Caco-2 (cell line): ENCODE measurements at regions of chr11 and their contacts with region 1.

Region 1: DNA sequence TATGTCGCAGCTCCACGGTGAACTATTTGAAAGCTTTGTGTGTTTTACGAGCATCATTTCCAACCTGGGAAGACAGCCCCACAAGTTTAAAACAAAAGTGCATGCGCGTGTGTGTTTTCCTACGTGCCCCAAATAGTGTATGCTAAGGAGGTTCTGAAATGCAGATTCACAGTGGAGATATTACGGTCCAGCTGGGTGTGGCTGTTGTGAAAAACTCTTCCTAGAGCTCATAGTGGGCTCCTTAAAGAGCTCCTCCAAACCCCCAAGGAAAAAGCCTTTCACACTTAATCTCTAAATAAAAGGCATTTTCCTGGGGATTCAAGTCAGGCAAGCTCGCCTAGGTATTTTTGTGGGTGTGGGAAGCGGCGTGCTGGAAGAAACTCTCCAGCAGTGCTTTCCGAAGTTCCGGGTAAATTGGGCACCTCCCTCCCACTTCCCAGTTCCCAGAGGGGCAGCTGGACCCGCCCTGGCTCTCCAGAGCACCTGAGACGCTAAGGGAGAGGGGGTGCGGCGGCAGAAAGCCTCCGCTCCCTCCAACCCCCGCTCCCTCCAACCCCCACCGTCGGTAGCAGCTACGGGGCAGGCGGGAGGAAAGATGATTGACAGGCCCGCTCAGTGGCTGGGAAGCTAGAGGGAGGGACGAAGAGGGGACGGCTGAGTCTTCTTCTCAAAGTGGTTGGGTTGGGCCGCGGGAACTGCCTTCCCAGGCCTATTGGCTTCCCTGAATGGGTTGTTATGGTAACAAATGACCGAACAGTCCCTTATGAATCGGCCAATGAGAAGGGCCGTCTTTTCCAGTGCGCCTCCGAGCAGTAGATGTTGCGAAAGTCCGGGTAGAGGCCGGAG is 558 bp upstream of the PCF11 start:
- DNase-seq: peak; percentile 100
- H3K4me3 ChIP-seq: peak overlapping the region; percentile 49
- H3K4me3 Mint-ChIP-seq: peak overlapping the region; percentile 95
- H3K27ac Mint-ChIP-seq: peak overlapping the region; percentile 99
- H3K4me1 ChIP-seq: peaks cover 21% of the 10 kb centered on the region
- H3K4me1 Mint-ChIP-seq: peaks cover 28% of the 10 kb centered on the region
- H3K27me3 ChIP-seq: no peaks in the 10 kb centered on the region
- H3K27me3 Mint-ChIP-seq: no peaks in the 10 kb centered on the region
- CTCF ChIP-seq: no peak

Region 2: GRCh38 chr11:82900277-82901164 is 255.9 kb before region 1 on chr11 and contains the start of gene PRCP:
- CTCF ChIA-PET with region 1: interaction called, 9 read pairs
- POLR2A ChIA-PET with region 1: interaction called, 34 read pairs
- intact Hi-C with region 1: loop called (anchors 1 kb)
- DNase-seq: peak; percentile 99
- H3K4me3 ChIP-seq: peak within 1 kb of the TSS; percentile 63
- H3K4me3 Mint-ChIP-seq: peak within 1 kb of the TSS; percentile 93
- H3K27ac Mint-ChIP-seq: peak within 1 kb of the TSS; percentile 95
- H3K4me1 ChIP-seq: peaks cover 4% of the 10 kb centered on the region; the same call in 1 of the 2 replicates
- H3K4me1 Mint-ChIP-seq: peaks cover 40% of the 10 kb centered on the region
- H3K27me3 ChIP-seq: no peaks in the 10 kb centered on the region
- H3K27me3 Mint-ChIP-seq: no peaks in the 10 kb centered on the region
- CTCF ChIP-seq: no peak
- total RNA-seq, gene PRCP: 107 TPM in 2 replicates

Region 3: DNA sequence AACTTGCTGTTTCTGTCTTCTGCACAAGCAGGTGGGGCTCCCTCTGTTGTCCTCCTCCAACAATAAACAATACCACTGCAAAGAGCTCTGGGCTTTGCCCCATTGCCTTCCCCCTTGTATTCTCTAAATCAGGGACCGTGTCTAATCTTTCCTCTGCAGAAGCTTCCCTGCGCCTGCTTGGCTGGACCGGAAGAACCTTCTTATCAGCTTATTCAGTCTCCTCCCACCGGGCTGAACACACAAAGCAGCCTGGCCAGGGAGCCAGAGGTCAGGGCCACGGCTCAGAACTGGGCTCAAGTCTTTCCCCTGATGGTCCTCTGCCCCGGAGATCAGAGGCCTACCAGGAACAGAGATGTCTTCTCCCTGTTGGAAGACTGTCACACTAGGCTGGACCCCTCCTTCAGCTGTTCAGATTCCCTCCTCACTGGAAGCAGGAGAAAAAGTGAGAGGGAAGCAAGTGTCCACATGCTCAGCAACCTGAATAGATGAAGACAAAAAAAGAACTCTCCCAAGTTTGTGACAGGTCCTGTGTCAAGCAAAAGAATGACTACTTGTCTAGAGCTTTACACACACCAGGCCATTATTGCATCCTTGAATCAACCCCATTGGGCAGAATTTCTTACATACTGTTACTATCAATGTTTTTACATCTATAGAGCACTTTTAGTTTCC is 148.3 kb before region 1 on chr11:
- CTCF ChIA-PET with region 1: no interaction called
- POLR2A ChIA-PET with region 1: no interaction called
- intact Hi-C with region 1: loop called (anchors 2 kb)
- DNase-seq: peak; percentile 79 to 84
- H3K4me3 ChIP-seq: no peak overlapping the region
- H3K4me3 Mint-ChIP-seq: peak overlapping the region; percentile 54
- H3K27ac Mint-ChIP-seq: peak overlapping the region; percentile 76
- H3K4me1 ChIP-seq: peaks cover 25% of the 10 kb centered on the region
- H3K4me1 Mint-ChIP-seq: peaks cover 30% of the 10 kb centered on the region
- H3K27me3 ChIP-seq: no peaks in the 10 kb centered on the region
- H3K27me3 Mint-ChIP-seq: no peaks in the 10 kb centered on the region
- CTCF ChIP-seq: no peak

Region 4: GRCh38 chr11:83087035-83087434 is 69.3 kb before region 1 on chr11:
- CTCF ChIA-PET with region 1: interaction called, 29 read pairs
- POLR2A ChIA-PET with region 1: interaction called, 57 read pairs
- intact Hi-C with region 1: loop called (anchors 1 kb)
- DNase-seq: peak in 1 of 2 experiments; percentile 28
- H3K4me3 ChIP-seq: no peak overlapping the region
- H3K4me3 Mint-ChIP-seq: no peak overlapping the region
- H3K27ac Mint-ChIP-seq: no peak overlapping the region
- H3K4me1 ChIP-seq: peaks cover 13% of the 10 kb centered on the region
- H3K4me1 Mint-ChIP-seq: peaks cover 48% of the 10 kb centered on the region
- H3K27me3 ChIP-seq: no peaks in the 10 kb centered on the region
- H3K27me3 Mint-ChIP-seq: no peaks in the 10 kb centered on the region
- CTCF ChIP-seq: peak; percentile 51 to 61

Region 5: DNA sequence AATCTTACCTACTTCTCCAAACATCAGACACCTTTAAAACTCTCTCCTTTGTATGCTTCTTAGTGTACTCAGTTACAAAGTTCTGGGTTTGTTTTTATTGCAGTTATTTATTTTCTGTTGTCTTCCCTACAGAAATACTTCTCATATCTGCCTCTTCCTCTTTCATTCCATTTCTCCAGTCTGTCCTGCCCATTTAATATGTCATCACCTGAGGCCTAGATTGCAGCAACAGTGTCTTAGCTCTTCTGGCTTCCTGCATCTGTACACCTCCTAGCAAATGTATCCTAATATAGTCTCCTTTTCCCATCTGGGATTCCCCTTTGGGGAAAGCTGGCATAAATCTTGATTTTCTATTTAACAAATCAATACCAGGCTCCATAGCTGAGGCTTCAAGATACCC is 34.3 kb before region 1 on chr11:
- CTCF ChIA-PET with region 1: no interaction called
- POLR2A ChIA-PET with region 1: no interaction called
- intact Hi-C with region 1: no loop called
- DNase-seq: no peak
- H3K4me3 ChIP-seq: no peak overlapping the region
- H3K4me3 Mint-ChIP-seq: no peak overlapping the region
- H3K27ac Mint-ChIP-seq: no peak overlapping the region
- H3K4me1 ChIP-seq: no peaks in the 10 kb centered on the region
- H3K4me1 Mint-ChIP-seq: no peaks in the 10 kb centered on the region
- H3K27me3 ChIP-seq: no peaks in the 10 kb centered on the region
- H3K27me3 Mint-ChIP-seq: no peaks in the 10 kb centered on the region
- CTCF ChIP-seq: no peak

Region 6: DNA sequence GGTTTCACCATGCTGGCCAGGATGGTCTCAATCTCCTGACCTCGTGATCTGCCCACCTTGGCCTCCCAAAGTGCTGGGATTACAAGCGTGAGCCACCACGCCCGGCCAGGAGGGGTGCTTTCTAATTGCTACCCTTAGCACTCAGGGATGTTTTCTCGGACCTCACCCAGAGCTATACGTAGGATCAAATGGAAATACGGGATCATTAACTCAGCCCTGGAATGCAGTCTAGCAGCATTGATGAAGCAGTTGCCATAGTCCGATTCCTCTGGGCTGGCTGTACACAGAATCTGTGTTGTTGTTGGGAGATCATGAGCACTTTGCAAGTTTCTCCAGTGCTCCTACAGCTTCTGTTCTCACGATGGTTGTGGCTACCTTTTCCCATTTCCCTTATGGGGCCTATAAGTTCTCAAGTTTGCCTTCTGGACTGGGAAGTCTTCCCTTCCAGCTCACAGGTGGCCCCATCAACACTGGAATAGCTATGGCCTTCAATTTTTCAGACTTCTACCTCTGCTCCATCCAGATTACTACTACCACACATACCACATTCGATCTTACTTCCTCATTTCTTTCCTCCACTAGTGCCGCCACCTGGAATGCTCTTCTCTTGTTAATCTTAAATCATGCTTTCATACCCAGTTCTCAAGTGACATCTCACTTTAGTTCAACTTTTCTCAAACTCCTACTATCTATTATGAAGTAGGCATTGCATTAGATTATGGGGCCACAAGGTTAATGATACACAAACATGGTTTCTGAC is 15.5 kb before region 1 on chr11:
- CTCF ChIA-PET with region 1: interaction called, 5 read pairs
- POLR2A ChIA-PET with region 1: interaction called, 32 read pairs
- intact Hi-C with region 1: loop called (anchors 1 kb)
- DNase-seq: peak; percentile 75 to 79
- H3K4me3 ChIP-seq: no peak overlapping the region
- H3K4me3 Mint-ChIP-seq: peak overlapping the region; percentile 4
- H3K27ac Mint-ChIP-seq: peak overlapping the region; percentile 57
- H3K4me1 ChIP-seq: peaks cover 18% of the 10 kb centered on the region
- H3K4me1 Mint-ChIP-seq: peaks cover 13% of the 10 kb centered on the region
- H3K27me3 ChIP-seq: no peaks in the 10 kb centered on the region
- H3K27me3 Mint-ChIP-seq: no peaks in the 10 kb centered on the region
- CTCF ChIP-seq: no peak

Region 7: GRCh38 chr11:83193315-83194280 is 37.2 kb after region 1 on chr11 and contains the start of gene ANKRD42:
- CTCF ChIA-PET with region 1: no interaction called
- POLR2A ChIA-PET with region 1: interaction called, 19 read pairs
- intact Hi-C with region 1: loop called (anchors 1 kb)
- DNase-seq: peak; percentile 96 to 97
- H3K4me3 ChIP-seq: peak within 1 kb of the TSS; percentile 77
- H3K4me3 Mint-ChIP-seq: peak within 1 kb of the TSS; percentile 80
- H3K27ac Mint-ChIP-seq: peak within 1 kb of the TSS; percentile 89
- H3K4me1 ChIP-seq: peaks cover 7% of the 10 kb centered on the region; the same call in 1 of the 2 replicates
- H3K4me1 Mint-ChIP-seq: peaks cover 30% of the 10 kb centered on the region
- H3K27me3 ChIP-seq: no peaks in the 10 kb centered on the region
- H3K27me3 Mint-ChIP-seq: no peaks in the 10 kb centered on the region
- CTCF ChIP-seq: peak in 1 of 2 experiments; percentile 4
- total RNA-seq, gene ANKRD42: 8.3 and 9.0 TPM in 2 replicates

Region 8: DNA sequence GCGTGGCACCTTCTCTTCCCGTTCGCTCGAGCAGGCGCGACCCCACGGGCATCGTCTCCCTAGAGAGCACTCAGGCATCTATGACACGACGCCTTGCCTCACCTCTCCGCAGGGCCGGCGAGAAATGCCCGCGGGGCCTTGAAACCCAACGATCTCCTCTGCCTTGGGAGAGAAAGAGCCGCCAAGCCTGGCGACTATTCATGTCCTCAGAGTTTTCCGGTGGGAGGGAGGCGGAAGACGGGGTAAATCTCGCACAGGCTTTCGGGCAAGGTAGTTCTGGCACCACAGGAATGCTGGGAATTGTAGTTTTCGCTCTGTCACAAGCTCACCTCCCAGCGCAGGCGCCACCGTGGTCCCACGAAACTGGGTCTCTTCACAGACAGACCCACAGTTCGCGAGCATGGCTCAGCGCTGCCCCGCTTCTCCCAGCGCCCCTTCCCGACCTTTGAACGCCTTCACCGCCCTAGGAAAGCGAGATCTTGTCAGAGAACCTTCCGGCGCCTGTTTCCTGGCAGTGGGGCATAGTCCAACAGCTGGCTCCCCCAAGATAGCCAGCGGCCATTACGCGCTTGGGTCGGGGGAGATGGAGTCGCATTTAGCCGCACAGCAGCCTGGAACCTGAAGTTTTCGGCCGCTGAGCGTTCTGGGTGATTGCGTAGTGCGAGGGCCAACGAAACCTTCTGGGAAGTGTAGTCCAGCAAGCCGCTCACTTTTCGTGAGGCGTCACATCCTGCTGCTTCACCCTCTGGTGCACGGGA is 129.6 kb after region 1 on chr11 and contains the start of gene CCDC90B:
- CTCF ChIA-PET with region 1: no interaction called
- POLR2A ChIA-PET with region 1: interaction called, 7 read pairs
- intact Hi-C with region 1: loop called (anchors 1 kb)
- DNase-seq: peak; percentile 98 to 99
- H3K4me3 ChIP-seq: peak within 1 kb of the TSS; percentile 93
- H3K4me3 Mint-ChIP-seq: peak within 1 kb of the TSS; percentile 73
- H3K27ac Mint-ChIP-seq: peak within 1 kb of the TSS; percentile 97
- H3K4me1 ChIP-seq: peaks cover 14% of the 10 kb centered on the region
- H3K4me1 Mint-ChIP-seq: peaks cover 7% of the 10 kb centered on the region
- H3K27me3 ChIP-seq: no peaks in the 10 kb centered on the region
- H3K27me3 Mint-ChIP-seq: no peaks in the 10 kb centered on the region
- CTCF ChIP-seq: peak in 1 of 2 experiments; percentile 66
- total RNA-seq, gene CCDC90B: 46.2 and 63.6 TPM in 2 replicates

Region 9: DNA sequence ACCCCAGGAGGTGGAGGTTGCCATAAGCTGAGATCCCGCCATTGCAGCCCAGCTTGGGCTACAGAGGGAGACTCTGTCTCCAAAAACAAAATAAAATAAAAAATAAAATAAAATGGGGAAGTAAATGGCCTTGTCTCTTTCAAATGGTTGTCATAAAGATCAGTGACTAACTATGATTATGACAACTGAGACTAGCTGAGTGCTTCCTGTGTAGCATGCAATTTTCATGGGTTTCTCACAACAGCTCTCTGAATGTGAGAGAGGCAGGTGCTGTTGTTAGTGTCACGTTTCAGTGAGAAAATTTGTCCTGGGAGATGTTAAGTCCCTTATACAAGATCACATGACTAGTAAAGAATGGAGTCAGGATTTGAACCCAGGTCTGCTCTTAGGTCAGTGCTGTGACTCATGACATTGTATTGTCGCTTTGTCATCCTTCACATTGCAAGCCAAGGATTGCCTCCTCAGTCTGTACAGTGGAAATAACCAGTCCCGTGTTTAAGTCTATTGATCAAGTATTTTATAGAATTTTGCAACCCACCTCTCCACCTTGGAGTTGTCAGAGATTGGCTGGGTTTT is 293.1 kb after region 1 on chr11:
- CTCF ChIA-PET with region 1: no interaction called
- POLR2A ChIA-PET with region 1: no interaction called
- intact Hi-C with region 1: no loop called
- DNase-seq: no peak
- H3K4me3 ChIP-seq: no peak overlapping the region
- H3K4me3 Mint-ChIP-seq: no peak overlapping the region
- H3K27ac Mint-ChIP-seq: no peak overlapping the region
- H3K4me1 ChIP-seq: no peaks in the 10 kb centered on the region
- H3K4me1 Mint-ChIP-seq: no peaks in the 10 kb centered on the region
- H3K27me3 ChIP-seq: no peaks in the 10 kb centered on the region
- H3K27me3 Mint-ChIP-seq: peaks cover 12% of the 10 kb centered on the region
- CTCF ChIP-seq: no peak